ENCODE measurements at regions of chr16 and their contacts with region 1.

Region 1: GRCh38 chr16:68244903-68245853 is at the start of gene PLA2G15:
- DNase-seq: peak; percentile 94 to 99 (median 96)
- ATAC-seq: peak; percentile 99
- H3K4me3 ChIP-seq: peak within 1 kb of the TSS; percentile 94
- H3K4me3 Mint-ChIP-seq: peak within 1 kb of the TSS; percentile 99
- H3K27ac ChIP-seq: peak within 1 kb of the TSS in 1 of 2 donors; percentile 21
- H3K27ac Mint-ChIP-seq: peak within 1 kb of the TSS; percentile 50
- H3K4me1 ChIP-seq: peaks cover 29% of the 10 kb centered on the region
- H3K4me1 Mint-ChIP-seq: peaks cover 17% of the 10 kb centered on the region
- H3K27me3 ChIP-seq: no peaks in the 10 kb centered on the region
- H3K27me3 Mint-ChIP-seq: no peaks in the 10 kb centered on the region
- CTCF ChIP-seq: no peak
- total RNA-seq, gene PLA2G15: 4.3 to 4.7 TPM

Region 2: DNA sequence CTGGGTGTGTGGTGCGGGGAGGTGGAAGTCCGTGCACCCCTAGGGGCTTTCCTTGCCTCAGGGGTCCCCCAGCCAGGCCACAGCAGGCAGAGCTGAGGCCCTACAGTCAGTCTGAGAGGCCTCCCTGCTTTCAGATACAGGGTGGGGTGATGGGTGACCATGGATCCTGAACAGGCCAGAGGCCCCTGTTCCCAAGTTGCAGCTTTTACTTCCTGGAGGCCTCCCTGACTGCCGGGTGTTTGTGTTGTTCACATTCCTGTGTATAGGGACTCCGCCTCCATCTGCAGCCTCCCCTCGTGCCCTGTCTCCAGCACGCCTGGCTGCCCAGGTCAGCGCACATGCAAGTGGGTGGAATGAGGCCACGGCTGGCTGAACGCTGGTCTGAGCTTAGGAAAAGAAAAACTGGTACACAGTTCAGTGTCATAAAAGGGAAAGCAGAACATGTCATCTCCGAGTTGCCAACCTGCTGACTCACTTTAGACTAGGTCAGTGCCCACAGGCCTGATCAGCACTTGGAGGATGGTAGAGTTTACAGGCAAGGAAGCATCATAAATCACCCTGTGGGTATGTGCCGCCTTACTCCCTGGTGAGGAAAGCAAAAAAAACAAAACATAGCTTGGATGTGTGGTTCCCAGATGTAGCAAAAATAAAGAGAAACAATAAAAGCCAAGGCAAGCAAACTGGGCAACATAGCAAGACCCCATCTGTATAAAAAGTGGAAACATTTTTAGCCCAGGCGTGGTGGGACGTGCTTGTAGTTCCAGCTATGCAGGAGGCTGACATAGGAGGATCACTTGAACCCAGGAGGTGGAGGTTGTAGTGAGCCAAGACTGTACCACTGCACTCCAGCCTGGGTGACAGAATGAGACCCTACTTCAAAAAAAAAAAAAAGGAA is 13.0 kb after region 1 on chr16:
- CTCF ChIA-PET with region 1: interaction called, 12 read pairs
- POLR2A ChIA-PET with region 1: interaction called, 13 read pairs
- intact Hi-C with region 1: loop called in 1 of 2 experiments (anchors 1 kb)
- DNase-seq: peak in 1 of 14 experiments; percentile 20
- ATAC-seq: no peak
- H3K4me3 ChIP-seq: no peak overlapping the region
- H3K4me3 Mint-ChIP-seq: no peak overlapping the region
- H3K27ac ChIP-seq: no peak overlapping the region
- H3K27ac Mint-ChIP-seq: no peak overlapping the region
- H3K4me1 ChIP-seq: peaks cover 23% of the 10 kb centered on the region
- H3K4me1 Mint-ChIP-seq: peaks cover 20% of the 10 kb centered on the region
- H3K27me3 ChIP-seq: no peaks in the 10 kb centered on the region
- H3K27me3 Mint-ChIP-seq: no peaks in the 10 kb centered on the region
- CTCF ChIP-seq: no peak

Region 3: GRCh38 chr16:68448360-68448970 is 203.3 kb after region 1 on chr16 and contains the start of gene SMPD3:
- CTCF ChIA-PET with region 1: no interaction called
- POLR2A ChIA-PET with region 1: no interaction called
- intact Hi-C with region 1: loop called in 1 of 2 experiments (anchors 10 kb)
- DNase-seq: peak; percentile 95 to 99 (median 98)
- ATAC-seq: peak; percentile 98
- H3K4me3 ChIP-seq: peak within 1 kb of the TSS; percentile 58
- H3K4me3 Mint-ChIP-seq: peak within 1 kb of the TSS; percentile 77
- H3K27ac ChIP-seq: no peak within 1 kb of the TSS
- H3K27ac Mint-ChIP-seq: no peak within 1 kb of the TSS
- H3K4me1 ChIP-seq: peaks cover 44% of the 10 kb centered on the region
- H3K4me1 Mint-ChIP-seq: peaks cover 21% of the 10 kb centered on the region
- H3K27me3 ChIP-seq: peaks cover 26 to 31% of the 10 kb centered on the region in 2 experiments
- H3K27me3 Mint-ChIP-seq: peaks cover 29% of the 10 kb centered on the region
- CTCF ChIP-seq: no peak
- total RNA-seq, gene SMPD3: 0.89 to 1.1 TPM

Measured in CD4-positive, alpha-beta T cell (primary cell).